ENCODE measurements at regions of chr2 and their contacts with region 1.

Region 1: DNA sequence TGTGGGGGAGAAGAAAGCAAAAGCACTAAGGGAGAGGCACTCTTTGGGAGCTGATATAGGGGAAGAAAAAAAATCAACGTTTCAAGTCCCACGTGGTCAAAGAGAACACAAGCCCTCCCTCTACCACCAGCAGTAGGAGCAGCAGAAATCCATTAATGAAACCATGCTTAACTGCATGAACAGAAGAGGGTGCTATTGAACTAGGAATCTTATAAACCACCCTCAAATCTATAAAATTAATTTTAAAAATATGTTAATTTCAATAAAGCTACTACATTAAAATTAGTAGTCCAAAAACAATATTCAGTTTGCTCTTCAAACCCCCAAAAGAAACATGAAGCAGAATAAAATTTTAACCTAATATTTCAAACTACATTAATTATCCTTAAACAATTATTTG is 147.8 kb downstream of the TMEM18 start:
- DNase-seq: no peak
- H3K4me3 Mint-ChIP-seq: no peak overlapping the region
- H3K27ac Mint-ChIP-seq: no peak overlapping the region
- H3K4me1 Mint-ChIP-seq: no peaks in the 10 kb centered on the region
- H3K27me3 Mint-ChIP-seq: no peaks in the 10 kb centered on the region

Region 2: DNA sequence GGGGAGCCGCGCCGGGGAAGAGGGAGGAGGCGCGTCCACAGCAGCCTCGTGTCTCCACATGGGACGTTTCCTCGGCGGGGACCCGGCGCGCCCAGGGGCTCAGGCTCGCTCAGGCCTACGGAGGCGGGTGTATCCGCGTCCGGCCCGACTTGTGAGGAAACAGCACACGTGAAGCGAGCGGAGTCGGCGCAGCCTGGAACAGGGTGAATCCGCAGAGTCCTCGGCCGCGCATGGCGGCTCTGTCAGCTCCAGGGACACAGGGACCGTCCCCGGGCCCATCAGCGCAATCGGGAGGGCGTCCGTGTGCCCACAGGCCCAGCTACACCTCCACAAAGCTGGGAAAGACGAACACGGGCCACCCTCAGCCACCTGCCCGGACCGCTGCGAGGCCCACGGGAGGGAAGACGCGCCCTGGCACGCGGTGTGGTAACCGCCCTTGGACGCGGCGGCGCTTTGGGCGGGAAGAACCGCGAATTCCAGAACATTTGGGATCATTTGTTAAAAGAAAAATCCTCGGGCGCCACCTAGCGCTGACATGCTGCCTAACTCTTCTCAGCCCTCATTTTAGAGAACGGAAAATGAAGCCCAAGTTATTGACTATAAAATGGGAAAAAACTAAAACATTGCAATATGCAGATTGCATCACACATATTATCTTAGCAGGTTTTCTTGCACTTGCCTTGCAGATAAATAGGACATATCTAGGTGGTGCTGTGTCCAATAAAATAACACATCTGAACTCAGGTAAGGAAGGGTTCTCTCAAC is 107.4 kb after region 1 on chr2:
- intact Hi-C with region 1: loop called (anchors 1 kb)
- DNase-seq: peak; percentile 11
- H3K4me3 Mint-ChIP-seq: peak overlapping the region; percentile 73
- H3K27ac Mint-ChIP-seq: peak overlapping the region; percentile 72
- H3K4me1 Mint-ChIP-seq: no peaks in the 10 kb centered on the region
- H3K27me3 Mint-ChIP-seq: peaks cover 4% of the 10 kb centered on the region

Region 3: DNA sequence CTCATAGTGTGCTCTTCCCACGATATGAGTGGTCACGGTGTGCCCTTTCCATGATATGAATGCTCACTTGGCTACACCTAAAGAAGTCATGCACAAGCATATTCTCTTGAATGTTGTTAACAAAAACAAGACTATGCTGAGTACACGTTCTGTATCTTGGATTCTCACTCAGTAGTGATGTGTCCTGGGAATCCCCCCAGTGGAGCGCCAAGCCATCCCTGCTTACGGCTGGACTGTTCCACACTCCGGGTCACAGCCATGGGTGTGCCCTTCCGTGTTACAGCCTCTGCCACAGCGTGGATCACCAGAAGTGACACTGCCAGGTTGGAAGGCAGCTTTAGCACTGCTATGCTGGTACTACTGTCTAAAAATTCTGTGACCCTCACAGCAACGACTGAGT is 942.9 kb after region 1 on chr2:
- intact Hi-C with region 1: no loop called
- DNase-seq: no peak
- H3K4me3 Mint-ChIP-seq: no peak overlapping the region
- H3K27ac Mint-ChIP-seq: no peak overlapping the region
- H3K4me1 Mint-ChIP-seq: no peaks in the 10 kb centered on the region
- H3K27me3 Mint-ChIP-seq: peaks cover 3% of the 10 kb centered on the region

Region 4: DNA sequence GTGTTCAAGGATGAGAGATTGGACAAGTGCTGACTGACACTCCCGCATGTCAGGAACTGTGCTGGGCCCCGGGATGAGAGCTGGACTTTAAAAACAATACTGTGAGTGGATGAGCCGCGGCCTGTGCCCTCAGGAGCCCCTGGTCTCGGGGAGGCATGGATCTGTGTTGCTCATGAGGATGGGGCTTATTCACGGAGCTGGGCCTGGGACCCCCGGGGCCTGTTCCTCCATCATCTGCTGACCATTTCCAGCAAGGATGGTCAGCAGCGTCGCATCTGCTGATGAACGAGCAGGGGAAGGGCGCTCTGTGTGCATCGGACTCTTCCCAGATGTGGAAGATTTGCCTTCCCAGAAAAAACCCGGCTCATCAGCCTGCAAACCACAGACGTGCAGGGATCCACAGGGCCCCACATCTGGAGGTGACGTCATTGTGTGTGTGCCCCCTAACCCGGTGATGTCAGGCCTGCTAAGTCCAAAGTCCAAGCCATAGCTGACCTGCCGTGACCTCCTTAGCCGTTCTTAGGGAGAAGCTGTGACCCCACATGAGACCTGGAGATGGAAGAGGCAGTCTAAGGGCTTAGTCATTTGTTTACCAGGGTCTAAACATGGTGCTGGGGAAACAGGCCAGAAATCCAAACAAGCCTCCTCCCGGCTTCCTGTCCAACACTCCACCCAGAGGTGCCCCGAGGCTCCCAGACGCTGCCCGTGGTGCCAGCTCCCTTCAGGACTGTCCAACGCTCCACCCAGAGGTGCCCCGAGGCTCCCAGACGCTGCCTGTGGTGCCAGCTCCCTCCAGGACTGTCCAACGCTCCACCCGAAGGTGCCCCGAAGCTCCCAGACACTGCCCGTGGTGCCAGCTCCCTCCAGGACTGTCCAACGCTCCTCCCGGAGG is 1071.0 kb after region 1 on chr2:
- intact Hi-C with region 1: no loop called
- DNase-seq: no peak
- H3K4me3 Mint-ChIP-seq: no peak overlapping the region
- H3K27ac Mint-ChIP-seq: no peak overlapping the region
- H3K4me1 Mint-ChIP-seq: no peaks in the 10 kb centered on the region
- H3K27me3 Mint-ChIP-seq: no peaks in the 10 kb centered on the region

Measured in activated T-helper 1 cell treated with anti-CD3 and anti-CD28 coated beads, Interleukin-12 subunit alpha, Interleukin-12 subunit beta, Interleukin-2, Interleukin-4 antibody, amounts not matched to agents 30 ng/mL and 10 ng/mL and 1 ng/mL, durations not matched to agents 14 hours and 24 hours and 36 hours (primary cell).